Naive thymus-derived CD4-positive, alpha-beta T cell (primary cell): ENCODE measurements at regions of chr7 and their contacts with region 1.

Region 1: DNA sequence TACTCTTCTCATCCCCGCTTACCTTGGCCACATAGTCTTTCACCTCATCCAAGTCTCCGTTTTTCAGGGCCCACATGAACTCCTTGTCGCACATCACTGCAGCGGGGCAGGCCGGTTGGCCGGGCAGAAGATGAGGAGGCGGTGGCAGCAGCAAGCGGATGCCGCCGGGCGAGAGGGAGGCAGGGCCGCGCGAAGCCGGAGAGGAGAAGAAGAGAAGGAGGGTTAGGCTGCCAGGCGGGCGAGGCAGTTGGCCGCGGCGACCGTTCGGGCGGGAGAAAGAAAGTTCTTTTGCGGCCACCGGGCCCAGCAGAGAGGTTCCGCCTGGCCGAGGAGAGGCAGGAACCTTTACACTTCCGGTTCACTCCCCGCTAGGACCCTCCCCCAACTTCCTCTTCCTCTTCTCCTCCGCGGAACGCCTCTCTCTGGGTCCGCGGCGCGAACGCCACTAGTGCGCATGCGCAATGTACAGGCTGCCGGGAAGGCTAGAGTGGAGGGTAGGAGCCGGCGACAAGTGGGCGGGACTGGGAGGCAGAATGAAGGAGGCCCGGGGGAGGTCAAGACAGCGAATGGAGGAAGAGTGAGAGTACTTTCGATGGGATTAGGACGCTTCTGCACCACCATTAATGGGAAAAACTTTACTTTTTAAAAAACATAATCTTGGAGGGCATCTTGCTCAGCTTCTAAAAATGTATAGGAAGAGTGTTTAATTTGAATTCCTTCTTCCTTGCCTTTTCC is at the start of gene MTPN:
- DNase-seq: peak; percentile 93 to 98 (median 96)
- ATAC-seq: peak; percentile 88
- H3K4me3 ChIP-seq: peak within 1 kb of the TSS; percentile 89
- H3K4me3 Mint-ChIP-seq: peak within 1 kb of the TSS; percentile 90 to 99 (median 94)
- H3K27ac ChIP-seq: peak within 1 kb of the TSS; percentile 94
- H3K27ac Mint-ChIP-seq: peak within 1 kb of the TSS; percentile 88 to 97 (median 93)
- H3K4me1 ChIP-seq: peaks cover 34 to 53% of the 10 kb centered on the region in 2 donors
- H3K4me1 Mint-ChIP-seq: peaks cover 46 to 81% (median 74%) of the 10 kb centered on the region in 7 donors
- H3K27me3 ChIP-seq: no peaks in the 10 kb centered on the region
- H3K27me3 Mint-ChIP-seq: peaks cover 0 to 2% (median 0%) of the 10 kb centered on the region in 5 donors
- total RNA-seq, gene MTPN: 69.7 to 117 (median 80.7) TPM

Region 2: GRCh38 chr7:134458806-134459698 is 1518.1 kb before region 1 on chr7 and contains the start of gene AKR1B1:
- CTCF ChIA-PET with region 1: no interaction called
- POLR2A ChIA-PET with region 1: no interaction called
- intact Hi-C with region 1: loop called (anchors 2 to 5 kb)
- DNase-seq: peak; percentile 76 to 88 (median 84)
- ATAC-seq: peak; percentile 94
- H3K4me3 ChIP-seq: peak within 1 kb of the TSS; percentile 78
- H3K4me3 Mint-ChIP-seq: peak within 1 kb of the TSS; percentile 71 to 94 (median 89)
- H3K27ac ChIP-seq: peak within 1 kb of the TSS; percentile 72
- H3K27ac Mint-ChIP-seq: peak within 1 kb of the TSS; percentile 80 to 92 (median 84)
- H3K4me1 ChIP-seq: peaks cover 20 to 30% of the 10 kb centered on the region in 2 donors
- H3K4me1 Mint-ChIP-seq: peaks cover 30 to 55% (median 48%) of the 10 kb centered on the region in 7 donors
- H3K27me3 ChIP-seq: no peaks in the 10 kb centered on the region
- H3K27me3 Mint-ChIP-seq: no peaks in the 10 kb centered on the region
- total RNA-seq, gene AKR1B1: 62.2 to 108 (median 100) TPM

Region 3: GRCh38 chr7:135170274-135170997 is 806.7 kb before region 1 on chr7 and contains the start of gene CYREN:
- CTCF ChIA-PET with region 1: no interaction called
- POLR2A ChIA-PET with region 1: no interaction called
- intact Hi-C with region 1: loop called in 1 of 2 experiments (anchors 2 kb)
- DNase-seq: peak; percentile 74 to 91 (median 82)
- ATAC-seq: peak; percentile 85
- H3K4me3 ChIP-seq: peak within 1 kb of the TSS; percentile 84
- H3K4me3 Mint-ChIP-seq: peak within 1 kb of the TSS; percentile 84 to 96 (median 90)
- H3K27ac ChIP-seq: peak within 1 kb of the TSS; percentile 95
- H3K27ac Mint-ChIP-seq: peak within 1 kb of the TSS; percentile 94 to 98 (median 95)
- H3K4me1 ChIP-seq: peaks cover 16 to 29% of the 10 kb centered on the region in 2 donors
- H3K4me1 Mint-ChIP-seq: peaks cover 31 to 59% (median 47%) of the 10 kb centered on the region in 7 donors
- H3K27me3 ChIP-seq: no peaks in the 10 kb centered on the region
- H3K27me3 Mint-ChIP-seq: no peaks in the 10 kb centered on the region
- total RNA-seq, gene CYREN: 25.6 to 50.7 (median 32.0) TPM

Region 4: GRCh38 chr7:135509903-135510602 is 467.1 kb before region 1 on chr7 and contains the start of gene CNOT4:
- CTCF ChIA-PET with region 1: no interaction called
- POLR2A ChIA-PET with region 1: no interaction called
- intact Hi-C with region 1: loop called (anchors 1 kb)
- DNase-seq: peak; percentile 82 to 97 (median 92)
- ATAC-seq: peak; percentile 96
- H3K4me3 ChIP-seq: peak within 1 kb of the TSS; percentile 78
- H3K4me3 Mint-ChIP-seq: no peak within 1 kb of the TSS
- H3K27ac ChIP-seq: peak within 1 kb of the TSS; percentile 97
- H3K27ac Mint-ChIP-seq: no peak within 1 kb of the TSS
- H3K4me1 ChIP-seq: peaks cover 12 to 15% of the 10 kb centered on the region in 2 donors
- H3K4me1 Mint-ChIP-seq: peaks cover 3 to 21% (median 14%) of the 10 kb centered on the region in 7 donors
- H3K27me3 ChIP-seq: no peaks in the 10 kb centered on the region
- H3K27me3 Mint-ChIP-seq: no peaks in the 10 kb centered on the region
- total RNA-seq, gene CNOT4: 28.7 to 39.4 (median 38.3) TPM

Region 5: DNA sequence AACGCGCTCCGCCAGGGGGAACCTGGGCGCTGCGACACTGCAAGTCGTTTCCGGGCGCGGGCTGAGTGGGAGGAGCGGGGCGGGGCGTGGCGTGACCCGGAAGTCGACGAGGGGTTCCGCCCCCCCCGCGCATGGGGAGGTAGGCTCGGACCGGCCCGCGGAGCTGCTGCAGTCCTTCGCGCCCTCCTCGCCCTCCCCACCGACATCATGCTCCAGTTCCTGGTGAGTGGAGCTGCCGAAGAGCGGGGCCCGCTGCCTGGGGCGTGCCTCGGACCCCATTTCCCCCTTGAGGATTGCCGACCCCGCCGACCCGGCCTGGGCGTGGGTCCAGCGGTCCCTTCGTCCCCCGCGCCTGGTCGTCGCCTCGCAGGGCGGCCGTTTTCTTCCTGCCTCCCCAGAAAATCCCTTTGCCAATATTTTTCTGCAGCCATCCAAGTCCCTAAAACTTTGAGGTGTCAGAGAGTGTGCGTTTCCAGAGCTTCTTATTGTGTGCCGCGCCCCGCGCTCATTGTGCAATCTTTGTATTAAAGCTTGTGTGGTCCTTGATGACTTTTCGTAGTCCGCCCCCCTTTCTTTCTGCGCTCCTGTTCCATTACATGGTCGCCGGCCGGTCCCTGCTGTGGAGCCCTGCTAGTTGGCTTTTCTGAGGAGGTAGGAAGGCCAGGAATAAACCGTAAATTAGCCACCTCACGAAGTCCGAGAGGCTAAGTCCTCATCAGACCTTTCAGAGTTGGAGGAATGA is 314.6 kb before region 1 on chr7 and contains the start of gene STMP1:
- CTCF ChIA-PET with region 1: interaction called, 3 read pairs
- POLR2A ChIA-PET with region 1: interaction called, 11 read pairs
- intact Hi-C with region 1: loop called (anchors 1 kb)
- DNase-seq: peak; percentile 89 to 97 (median 94)
- ATAC-seq: peak; percentile 99
- H3K4me3 ChIP-seq: peak within 1 kb of the TSS; percentile 91
- H3K4me3 Mint-ChIP-seq: peak within 1 kb of the TSS; percentile 86 to 98 (median 94)
- H3K27ac ChIP-seq: peak within 1 kb of the TSS; percentile 82
- H3K27ac Mint-ChIP-seq: peak within 1 kb of the TSS; percentile 80 to 95 (median 93)
- H3K4me1 ChIP-seq: peaks cover 6 to 15% of the 10 kb centered on the region in 2 donors
- H3K4me1 Mint-ChIP-seq: peaks cover 32 to 49% (median 43%) of the 10 kb centered on the region in 7 donors
- H3K27me3 ChIP-seq: no peaks in the 10 kb centered on the region
- H3K27me3 Mint-ChIP-seq: no peaks in the 10 kb centered on the region
- total RNA-seq, gene STMP1: 18.0 to 33.0 (median 24.7) TPM

Region 6: GRCh38 chr7:136009488-136010079 is 32.4 kb after region 1 on chr7:
- CTCF ChIA-PET with region 1: interaction called, 4 read pairs
- POLR2A ChIA-PET with region 1: no interaction called
- intact Hi-C with region 1: loop called (anchors 1 to 2 kb)
- DNase-seq: peak in 7 of 9 donors; percentile 13 to 51 (median 40)
- ATAC-seq: peak; percentile 45
- H3K4me3 ChIP-seq: no peak overlapping the region
- H3K4me3 Mint-ChIP-seq: no peak overlapping the region
- H3K27ac ChIP-seq: no peak overlapping the region
- H3K27ac Mint-ChIP-seq: no peak overlapping the region
- H3K4me1 ChIP-seq: no peaks in the 10 kb centered on the region
- H3K4me1 Mint-ChIP-seq: peaks cover 0 to 10% (median 6%) of the 10 kb centered on the region in 7 donors
- H3K27me3 ChIP-seq: no peaks in the 10 kb centered on the region
- H3K27me3 Mint-ChIP-seq: peaks cover 3 to 22% (median 9%) of the 10 kb centered on the region in 5 donors